ENCODE measurements at regions of chr5 and their contacts with region 1.

Region 1: GRCh38 chr5:50727149-50727496 is 60.7 kb downstream of the PARP8 start:
- DNase-seq: peak in 1 of 2 donors; percentile 39
- ATAC-seq: peak in 2 of 3 donors; percentile 58 to 78
- H3K4me3 ChIP-seq: no peak overlapping the region
- H3K4me3 Mint-ChIP-seq: peak overlapping the region; percentile 65
- H3K27ac ChIP-seq: peak overlapping the region; percentile 0
- H3K27ac Mint-ChIP-seq: peak overlapping the region; percentile 81 to 82
- H3K4me1 ChIP-seq: peaks cover 16% of the 10 kb centered on the region
- H3K4me1 Mint-ChIP-seq: peaks cover 71 to 72% of the 10 kb centered on the region in 2 donors
- H3K27me3 ChIP-seq: no peaks in the 10 kb centered on the region
- H3K27me3 Mint-ChIP-seq: no peaks in the 10 kb centered on the region
- CTCF ChIP-seq: no peak

Region 2: GRCh38 chr5:50684721-50685120 is 42.4 kb before region 1 on chr5:
- intact Hi-C with region 1: no loop called
- DNase-seq: no peak
- ATAC-seq: no peak
- H3K4me3 ChIP-seq: no peak overlapping the region
- H3K4me3 Mint-ChIP-seq: no peak overlapping the region
- H3K27ac ChIP-seq: no peak overlapping the region
- H3K27ac Mint-ChIP-seq: peak overlapping the region; percentile 43 to 84
- H3K4me1 ChIP-seq: peaks cover 17% of the 10 kb centered on the region
- H3K4me1 Mint-ChIP-seq: peaks cover 73 to 76% of the 10 kb centered on the region in 2 donors
- H3K27me3 ChIP-seq: no peaks in the 10 kb centered on the region
- H3K27me3 Mint-ChIP-seq: no peaks in the 10 kb centered on the region
- CTCF ChIP-seq: no peak

Region 3: DNA sequence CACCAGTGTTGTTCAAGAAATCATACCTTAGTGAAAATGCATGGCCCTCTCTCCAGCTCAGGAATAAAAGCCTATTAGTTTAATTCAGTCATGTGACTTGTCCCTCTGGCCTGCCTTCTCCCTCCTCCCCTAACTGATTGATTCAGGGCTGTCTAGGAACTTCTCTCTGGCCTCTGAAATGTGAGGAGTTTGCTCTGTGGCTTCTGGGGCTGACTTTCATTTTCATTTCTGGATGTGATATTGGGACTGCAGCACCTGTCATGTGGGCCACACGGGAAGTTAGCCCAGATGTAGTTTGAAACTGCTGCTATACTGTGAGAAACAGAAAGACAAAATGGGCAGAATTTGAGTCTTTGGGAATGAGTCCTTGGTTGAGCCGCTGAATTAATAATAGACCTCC is 15.8 kb before region 1 on chr5:
- intact Hi-C with region 1: loop called (anchors 2 kb)
- DNase-seq: peak; percentile 31 to 88
- ATAC-seq: peak; percentile 85 to 92 (median 88)
- H3K4me3 ChIP-seq: peak overlapping the region; percentile 4
- H3K4me3 Mint-ChIP-seq: peak overlapping the region; percentile 73
- H3K27ac ChIP-seq: peak overlapping the region; percentile 72
- H3K27ac Mint-ChIP-seq: peak overlapping the region; percentile 90 to 91
- H3K4me1 ChIP-seq: peaks cover 28% of the 10 kb centered on the region
- H3K4me1 Mint-ChIP-seq: peaks cover 74 to 81% of the 10 kb centered on the region in 2 donors
- H3K27me3 ChIP-seq: no peaks in the 10 kb centered on the region
- H3K27me3 Mint-ChIP-seq: no peaks in the 10 kb centered on the region
- CTCF ChIP-seq: no peak

Measured in natural killer cell (primary cell).